ENCODE measurements at regions of chr22 and their contacts with region 1.

Region 1: GRCh38 chr22:37887610-37888378 is 18.3 kb upstream of the MICALL1 start:
- DNase-seq: peak in 3 of 10 donors; percentile 34 to 59 (median 54)
- H3K4me3 ChIP-seq: no peak overlapping the region
- H3K27ac ChIP-seq: peak overlapping the region in 58 of 59 donors; percentile 9 to 86 (median 73)
- H3K27me3 ChIP-seq: no peaks in the 10 kb centered on the region
- CTCF ChIP-seq: peak; percentile 23 to 94 (median 74)

Region 2: GRCh38 chr22:37933711-37934376 is 46.0 kb after region 1 on chr22:
- intact Hi-C with region 1: loop called (anchors 2 to 5 kb)
- DNase-seq: peak; percentile 81 to 90 (median 84)
- H3K4me3 ChIP-seq: peak overlapping the region in 1 of 59 donors; percentile 12
- H3K27ac ChIP-seq: peak overlapping the region in 54 of 59 donors; percentile 14 to 84 (median 69)
- H3K27me3 ChIP-seq: no peaks in the 10 kb centered on the region
- CTCF ChIP-seq: peak; percentile 42 to 99 (median 94)

Region 3: GRCh38 chr22:37965940-37966664 is 78.3 kb after region 1 on chr22:
- intact Hi-C with region 1: loop called (anchors 5 kb)
- DNase-seq: no peak
- H3K4me3 ChIP-seq: no peak overlapping the region
- H3K27ac ChIP-seq: peak overlapping the region in 54 of 59 donors; percentile 49 to 100 (median 92)
- H3K27me3 ChIP-seq: no peaks in the 10 kb centered on the region
- CTCF ChIP-seq: no peak

Measured in dorsolateral prefrontal cortex (tissue), 120 donors.